ENCODE measurements at regions of chr17 and their contacts with region 1.

Region 1: GRCh38 chr17:51537996-51538550 is 277.7 kb downstream of the UTP18 start:
- DNase-seq: no peak
- H3K4me3 ChIP-seq: no peak overlapping the region
- H3K27ac ChIP-seq: no peak overlapping the region
- H3K4me1 ChIP-seq: no peaks in the 10 kb centered on the region
- H3K27me3 ChIP-seq: no peaks in the 10 kb centered on the region
- CTCF ChIP-seq: no peak

Region 2: DNA sequence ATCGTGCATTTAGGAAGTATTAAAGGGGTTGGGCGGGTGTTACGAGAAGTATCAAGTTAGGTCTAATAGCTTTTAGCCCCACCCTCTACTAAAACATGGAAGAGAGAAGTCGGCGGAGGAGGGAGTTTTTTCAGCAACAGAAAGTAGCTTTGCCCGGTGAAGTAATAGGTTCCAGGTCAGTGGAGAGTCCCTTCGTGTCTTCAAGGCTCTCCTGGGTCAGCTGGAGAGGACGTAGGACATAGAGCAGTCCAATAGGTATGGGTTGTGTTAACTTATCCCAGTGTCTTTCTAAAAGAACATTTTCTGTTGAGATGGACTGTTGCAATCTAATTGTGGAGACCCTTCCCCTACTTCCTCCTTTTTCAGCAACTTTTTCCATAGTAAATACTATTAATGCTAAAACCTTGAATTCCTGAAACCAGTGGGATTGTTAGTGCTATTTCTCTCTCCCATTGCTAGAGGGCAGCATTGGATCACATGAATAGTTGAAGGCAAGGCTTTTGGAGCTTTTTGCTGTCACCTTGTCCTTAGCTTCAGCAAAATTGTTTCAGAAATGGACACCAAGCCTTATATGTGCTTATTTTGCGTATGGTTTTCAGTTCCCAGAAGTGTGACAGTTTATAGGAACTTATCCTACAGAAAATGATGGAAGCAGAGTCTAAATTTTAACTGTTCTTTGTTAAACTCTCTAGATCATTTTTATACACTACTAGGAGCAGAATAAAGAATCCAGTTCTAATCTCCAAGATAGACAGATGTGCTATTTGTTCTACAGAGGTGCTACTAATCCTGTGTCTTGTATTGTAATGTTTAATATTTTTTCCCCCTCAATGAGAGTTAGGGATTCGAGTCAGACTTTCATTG is 239.3 kb before region 1 on chr17:
- intact Hi-C with region 1: loop called (anchors 5 kb)
- DNase-seq: no peak
- H3K4me3 ChIP-seq: no peak overlapping the region
- H3K27ac ChIP-seq: no peak overlapping the region
- H3K4me1 ChIP-seq: no peaks in the 10 kb centered on the region
- H3K27me3 ChIP-seq: no peaks in the 10 kb centered on the region
- CTCF ChIP-seq: peak; percentile 37

Region 3: GRCh38 chr17:51365090-51365489 is 173.0 kb before region 1 on chr17:
- intact Hi-C with region 1: loop called (anchors 5 kb)
- DNase-seq: no peak
- H3K4me3 ChIP-seq: no peak overlapping the region
- H3K27ac ChIP-seq: no peak overlapping the region
- H3K4me1 ChIP-seq: no peaks in the 10 kb centered on the region
- H3K27me3 ChIP-seq: no peaks in the 10 kb centered on the region
- CTCF ChIP-seq: no peak

Region 4: GRCh38 chr17:51435641-51436091 is 102.4 kb before region 1 on chr17:
- intact Hi-C with region 1: no loop called
- DNase-seq: peak; percentile 42
- H3K4me3 ChIP-seq: no peak overlapping the region
- H3K27ac ChIP-seq: no peak overlapping the region
- H3K4me1 ChIP-seq: no peaks in the 10 kb centered on the region
- H3K27me3 ChIP-seq: no peaks in the 10 kb centered on the region
- CTCF ChIP-seq: no peak

Region 5: GRCh38 chr17:51472670-51473205 is 65.3 kb before region 1 on chr17:
- intact Hi-C with region 1: no loop called
- DNase-seq: no peak
- H3K4me3 ChIP-seq: no peak overlapping the region
- H3K27ac ChIP-seq: no peak overlapping the region
- H3K4me1 ChIP-seq: no peaks in the 10 kb centered on the region
- H3K27me3 ChIP-seq: no peaks in the 10 kb centered on the region
- CTCF ChIP-seq: no peak